Activated CD4-positive, alpha-beta memory T cell treated with anti-CD3 and anti-CD28 coated beads for 36 hours (primary cell): ENCODE measurements at regions of chr20 and their contacts with region 1.

Region 1: GRCh38 chr20:44651684-44652423 is at the start of gene ADA:
- DNase-seq: peak; percentile 53
- H3K4me3 Mint-ChIP-seq: peak within 1 kb of the TSS; percentile 85
- H3K27ac Mint-ChIP-seq: peak within 1 kb of the TSS; percentile 79
- H3K4me1 Mint-ChIP-seq: peaks cover 40% of the 10 kb centered on the region
- H3K27me3 Mint-ChIP-seq: no peaks in the 10 kb centered on the region
- total RNA-seq, gene ADA: 35.7 to 38.0 TPM

Region 2: GRCh38 chr20:44666066-44666465 is 14.2 kb after region 1 on chr20:
- CTCF ChIA-PET with region 1: interaction called, 3 read pairs
- POLR2A ChIA-PET with region 1: no interaction called
- intact Hi-C with region 1: loop called (anchors 2 kb)
- DNase-seq: no peak
- H3K4me3 Mint-ChIP-seq: no peak overlapping the region
- H3K27ac Mint-ChIP-seq: no peak overlapping the region
- H3K4me1 Mint-ChIP-seq: peaks cover 13% of the 10 kb centered on the region
- H3K27me3 Mint-ChIP-seq: no peaks in the 10 kb centered on the region